Gastrocnemius medialis (tissue), 4 donors: ENCODE measurements at regions of chr16 and their contacts with region 1.

Region 1: DNA sequence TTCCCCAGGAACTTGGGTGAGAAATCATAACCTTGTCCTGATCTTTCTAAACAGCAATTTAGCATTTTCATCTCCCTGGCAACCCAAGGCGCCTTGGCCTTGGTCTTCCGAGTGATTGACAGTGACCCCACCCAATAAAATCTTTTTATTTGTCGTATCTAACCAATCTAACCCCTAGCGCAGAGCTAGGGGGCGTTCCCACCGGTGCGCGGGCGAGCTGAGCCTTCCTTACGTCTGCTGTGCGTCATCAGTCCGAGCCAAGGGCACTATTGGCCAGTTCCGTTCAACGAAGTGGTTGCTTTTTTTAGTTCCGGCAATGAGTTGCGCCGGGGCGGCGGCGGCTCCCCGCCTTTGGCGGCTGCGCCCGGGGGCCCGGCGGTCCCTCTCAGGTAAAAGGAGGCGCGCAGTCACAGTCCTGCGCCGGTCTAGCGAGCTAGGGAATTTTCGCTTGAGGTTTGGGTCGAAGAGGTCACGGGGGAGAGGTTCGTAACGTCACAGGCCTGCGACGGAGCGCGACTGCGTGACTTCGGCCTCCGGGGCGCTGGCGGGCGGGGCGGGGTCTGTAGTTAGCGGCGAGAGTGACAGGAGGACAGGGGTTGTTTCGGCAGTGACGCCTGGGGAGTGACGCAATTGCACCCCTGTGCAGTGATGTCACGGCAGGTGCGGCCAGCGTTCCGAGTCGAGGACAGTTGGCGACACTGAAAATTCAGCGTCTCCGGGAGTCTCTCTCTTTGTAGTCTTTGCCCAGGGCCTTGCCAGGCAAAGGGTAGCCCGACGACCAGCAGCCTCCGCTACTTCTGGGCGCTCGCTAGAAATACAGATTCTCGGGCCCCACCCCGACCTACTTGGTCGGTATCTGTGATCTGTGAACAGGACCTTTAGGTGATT is at the start of gene COQ7:
- DNase-seq: peak; percentile 98 to 99
- ATAC-seq: peak; percentile 95 to 98
- H3K4me3 ChIP-seq: peak within 1 kb of the TSS; percentile 75 to 95 (median 78)
- H3K27ac ChIP-seq: peak within 1 kb of the TSS; percentile 94 to 99 (median 96)
- H3K4me1 ChIP-seq: peaks cover 14 to 20% of the 10 kb centered on the region in 2 donors
- H3K27me3 ChIP-seq: no peaks in the 10 kb centered on the region
- CTCF ChIP-seq: no peak
- POLR2A ChIP-seq: peak; percentile 79 to 80
- total RNA-seq, gene COQ7: 15.1 to 36.2 (median 21.7) TPM

Region 2: GRCh38 chr16:18789850-18790724 is 277.5 kb before region 1 on chr16 and contains the start of gene RPS15A:
- in situ Hi-C with region 1: loop called in 1 of 4 experiments (anchors 25 kb)
- intact Hi-C with region 1: no loop called
- DNase-seq: peak; percentile 94 to 96
- ATAC-seq: peak; percentile 96 to 98
- H3K4me3 ChIP-seq: peak within 1 kb of the TSS; percentile 83 to 98 (median 86)
- H3K27ac ChIP-seq: peak within 1 kb of the TSS; percentile 87 to 96 (median 90)
- H3K4me1 ChIP-seq: peaks cover 40 to 48% of the 10 kb centered on the region in 2 donors
- H3K27me3 ChIP-seq: no peaks in the 10 kb centered on the region
- CTCF ChIP-seq: no peak
- POLR2A ChIP-seq: peak; percentile 86 to 89
- total RNA-seq, gene RPS15A: 1,340 to 2,259 (median 1,706) TPM

Region 3: GRCh38 chr16:18983565-18984424 is 83.8 kb before region 1 on chr16 and contains the start of gene TMC7:
- in situ Hi-C with region 1: loop called in 1 of 4 experiments (anchors 10 kb)
- intact Hi-C with region 1: loop called (anchors 1 kb)
- DNase-seq: peak; percentile 24 to 44
- ATAC-seq: peak; percentile 68 to 76
- H3K4me3 ChIP-seq: peak within 1 kb of the TSS; percentile 50 to 59 (median 55)
- H3K27ac ChIP-seq: peak within 1 kb of the TSS; percentile 44 to 61 (median 49)
- H3K4me1 ChIP-seq: no peaks in the 10 kb centered on the region
- H3K27me3 ChIP-seq: peaks cover 0 to 3% (median 0%) of the 10 kb centered on the region in 3 donors
- CTCF ChIP-seq: peak; percentile 40 to 66 (median 58)
- POLR2A ChIP-seq: no peak
- total RNA-seq, gene TMC7: 0.31 to 0.72 (median 0.64) TPM in 3 of 4 donors, not detected in the other

Region 4: GRCh38 chr16:19113453-19114351 is 46.1 kb after region 1 on chr16 and contains the start of gene ITPRIPL2:
- in situ Hi-C with region 1: no loop called
- intact Hi-C with region 1: loop called (anchors 5 kb)
- DNase-seq: peak; percentile 76 to 87
- ATAC-seq: peak; percentile 84 to 85
- H3K4me3 ChIP-seq: peak within 1 kb of the TSS; percentile 58 to 76 (median 74)
- H3K27ac ChIP-seq: peak within 1 kb of the TSS; percentile 94 to 95 (median 94)
- H3K4me1 ChIP-seq: peaks cover 42 to 44% of the 10 kb centered on the region in 2 donors
- H3K27me3 ChIP-seq: no peaks in the 10 kb centered on the region
- CTCF ChIP-seq: peak in 2 of 5 experiments; percentile 8 to 27
- POLR2A ChIP-seq: peak; percentile 72 to 75
- total RNA-seq, gene ITPRIPL2: 13.3 to 18.9 (median 18.5) TPM

Region 5: GRCh38 chr16:19203374-19204031 is 135.9 kb after region 1 on chr16:
- in situ Hi-C with region 1: no loop called
- intact Hi-C with region 1: no loop called
- DNase-seq: no peak
- ATAC-seq: no peak
- H3K4me3 ChIP-seq: no peak overlapping the region
- H3K27ac ChIP-seq: no peak overlapping the region
- H3K4me1 ChIP-seq: no peaks in the 10 kb centered on the region
- H3K27me3 ChIP-seq: no peaks in the 10 kb centered on the region
- CTCF ChIP-seq: no peak
- POLR2A ChIP-seq: no peak

Region 6: DNA sequence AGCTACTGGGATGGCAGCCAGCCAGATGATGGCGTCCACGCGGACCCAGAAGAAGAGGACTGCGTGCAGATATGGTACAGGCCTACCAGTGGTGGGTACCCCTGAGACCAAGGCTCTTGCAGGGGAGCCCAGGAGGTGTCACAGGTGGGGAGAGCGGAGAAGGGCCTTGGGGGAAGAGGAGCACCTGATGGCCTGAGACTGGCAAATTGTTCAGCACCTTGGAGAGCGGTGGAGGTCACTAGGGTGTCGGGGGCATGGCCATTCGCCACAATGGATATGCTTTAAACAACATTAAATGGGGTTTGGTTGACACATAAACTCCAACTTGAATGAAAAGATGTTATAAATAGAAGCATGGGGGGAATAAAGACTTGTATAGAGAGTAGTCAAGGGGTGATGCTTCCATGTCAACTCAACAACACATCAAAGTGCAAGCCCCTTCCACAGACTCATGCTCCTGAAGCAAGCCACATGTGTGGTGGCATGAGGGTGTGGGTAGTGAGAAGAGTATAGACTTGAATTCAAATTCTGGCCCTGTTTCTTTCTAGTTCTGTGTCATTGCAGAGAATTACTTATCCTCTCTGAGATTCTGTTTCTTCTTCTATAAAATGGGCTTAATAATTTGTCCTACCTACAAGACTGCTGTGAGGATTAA is 240.1 kb after region 1 on chr16:
- in situ Hi-C with region 1: no loop called
- intact Hi-C with region 1: no loop called
- DNase-seq: no peak
- ATAC-seq: no peak
- H3K4me3 ChIP-seq: no peak overlapping the region
- H3K27ac ChIP-seq: no peak overlapping the region
- H3K4me1 ChIP-seq: no peaks in the 10 kb centered on the region
- H3K27me3 ChIP-seq: no peaks in the 10 kb centered on the region
- CTCF ChIP-seq: no peak
- POLR2A ChIP-seq: no peak

Region 7: GRCh38 chr16:19555162-19555937 is 487.8 kb after region 1 on chr16 and contains the start of gene VPS35L:
- in situ Hi-C with region 1: no loop called
- intact Hi-C with region 1: loop called (anchors 1 kb)
- DNase-seq: peak; percentile 93 to 98
- ATAC-seq: peak; percentile 95 to 98
- H3K4me3 ChIP-seq: peak within 1 kb of the TSS; percentile 59 to 95 (median 64)
- H3K27ac ChIP-seq: peak within 1 kb of the TSS; percentile 91 to 95 (median 92)
- H3K4me1 ChIP-seq: peaks cover 8 to 17% of the 10 kb centered on the region in 2 donors
- H3K27me3 ChIP-seq: no peaks in the 10 kb centered on the region
- CTCF ChIP-seq: peak; percentile 81 to 86 (median 82)
- POLR2A ChIP-seq: peak; percentile 48 to 49
- total RNA-seq, gene VPS35L: 16.9 to 29.1 (median 24.8) TPM